ENCODE measurements at regions of chr21 and their contacts with region 1.

Region 1: GRCh38 chr21:38126669-38127303 is 130.0 kb upstream of the KCNJ15 start:
- DNase-seq: peak in 8 of 9 donors; percentile 11 to 49 (median 25)
- ATAC-seq: peak; percentile 57
- H3K4me3 ChIP-seq: no peak overlapping the region
- H3K4me3 Mint-ChIP-seq: no peak overlapping the region
- H3K27ac ChIP-seq: no peak overlapping the region
- H3K27ac Mint-ChIP-seq: no peak overlapping the region
- H3K4me1 ChIP-seq: no peaks in the 10 kb centered on the region
- H3K4me1 Mint-ChIP-seq: peaks cover 0 to 2% (median 0%) of the 10 kb centered on the region in 7 donors
- H3K27me3 ChIP-seq: no peaks in the 10 kb centered on the region
- H3K27me3 Mint-ChIP-seq: peaks cover 10 to 25% (median 17%) of the 10 kb centered on the region in 5 donors

Region 2: DNA sequence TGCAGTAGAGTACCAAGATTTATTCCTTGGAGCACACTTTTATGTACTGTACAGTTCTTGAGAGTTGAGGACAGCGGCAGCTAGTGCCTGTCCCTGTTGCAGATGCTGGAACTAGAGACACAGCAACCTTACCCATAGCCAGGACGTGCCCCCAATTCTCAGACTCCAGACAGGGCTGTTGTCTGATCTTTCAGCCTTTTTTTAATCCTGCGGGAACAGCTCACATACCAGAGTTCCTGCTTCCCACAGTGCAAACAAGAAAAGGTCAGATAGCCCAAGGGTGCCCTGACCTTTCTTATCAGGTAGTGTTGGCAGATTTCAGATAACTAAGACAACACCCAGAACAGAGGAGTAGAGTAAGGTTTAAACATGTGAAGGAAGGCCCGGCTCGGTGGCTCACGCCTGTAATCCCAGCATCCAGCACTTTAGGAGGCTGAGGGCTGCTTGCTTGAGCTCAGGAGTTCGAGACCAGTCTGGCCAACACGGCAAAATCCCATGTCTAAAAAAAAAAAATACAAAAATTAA is 1891.7 kb before region 1 on chr21:
- CTCF ChIA-PET with region 1: no interaction called
- POLR2A ChIA-PET with region 1: no interaction called
- intact Hi-C with region 1: no loop called
- DNase-seq: no peak
- ATAC-seq: no peak
- H3K4me3 ChIP-seq: no peak overlapping the region
- H3K4me3 Mint-ChIP-seq: no peak overlapping the region
- H3K27ac ChIP-seq: no peak overlapping the region
- H3K27ac Mint-ChIP-seq: no peak overlapping the region
- H3K4me1 ChIP-seq: peaks cover 0 to 4% of the 10 kb centered on the region in 2 donors
- H3K4me1 Mint-ChIP-seq: peaks cover 5 to 11% (median 10%) of the 10 kb centered on the region in 7 donors
- H3K27me3 ChIP-seq: no peaks in the 10 kb centered on the region
- H3K27me3 Mint-ChIP-seq: no peaks in the 10 kb centered on the region

Region 3: GRCh38 chr21:36630485-36631206 is 1496.1 kb before region 1 on chr21:
- CTCF ChIA-PET with region 1: interaction called, 3 read pairs
- POLR2A ChIA-PET with region 1: no interaction called
- intact Hi-C with region 1: loop called in 1 of 2 experiments (anchors 5 kb)
- DNase-seq: peak in 8 of 9 donors; percentile 14 to 57 (median 41)
- ATAC-seq: peak; percentile 54
- H3K4me3 ChIP-seq: no peak overlapping the region
- H3K4me3 Mint-ChIP-seq: no peak overlapping the region
- H3K27ac ChIP-seq: no peak overlapping the region
- H3K27ac Mint-ChIP-seq: no peak overlapping the region
- H3K4me1 ChIP-seq: no peaks in the 10 kb centered on the region
- H3K4me1 Mint-ChIP-seq: no peaks in the 10 kb centered on the region
- H3K27me3 ChIP-seq: no peaks in the 10 kb centered on the region
- H3K27me3 Mint-ChIP-seq: peaks cover 0 to 6% (median 3%) of the 10 kb centered on the region in 5 donors

Measured in naive thymus-derived CD4-positive, alpha-beta T cell (primary cell).